Activated B cell treated with CpG ODN at 0.5 μM for 24 hours (primary cell): ENCODE measurements at regions of chr7 and their contacts with region 1.

Region 1: DNA sequence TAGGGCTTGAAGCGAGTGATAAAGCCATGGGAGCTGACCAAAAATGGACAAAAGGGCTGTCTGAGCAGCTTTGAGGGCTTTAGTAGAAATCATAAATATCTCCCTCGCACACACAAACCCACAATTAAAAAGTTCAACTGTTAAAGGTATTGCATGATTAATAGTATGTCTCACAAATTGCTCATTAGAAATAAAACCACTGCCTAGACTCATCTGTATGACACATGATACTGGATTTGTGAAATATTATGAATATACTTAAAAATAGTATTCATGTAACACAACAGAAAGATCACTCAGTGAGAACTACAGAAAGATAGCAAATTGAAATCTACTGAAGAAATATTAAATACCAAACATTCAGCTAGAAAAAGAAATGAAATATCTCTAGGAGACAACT is 11.9 kb upstream of the PTPN12 start:
- DNase-seq: no peak
- ATAC-seq: no peak
- H3K4me3 Mint-ChIP-seq: no peak overlapping the region
- H3K27ac Mint-ChIP-seq: no peak overlapping the region
- H3K4me1 Mint-ChIP-seq: peaks cover 14% of the 10 kb centered on the region
- H3K27me3 Mint-ChIP-seq: no peaks in the 10 kb centered on the region
- CTCF ChIP-seq: no peak

Region 2: GRCh38 chr7:77460057-77460486 is 65.2 kb before region 1 on chr7:
- CTCF ChIA-PET with region 1: no interaction called
- POLR2A ChIA-PET with region 1: no interaction called
- intact Hi-C with region 1: no loop called
- DNase-seq: no peak
- ATAC-seq: no peak
- H3K4me3 Mint-ChIP-seq: no peak overlapping the region
- H3K27ac Mint-ChIP-seq: no peak overlapping the region
- H3K4me1 Mint-ChIP-seq: peaks cover 17% of the 10 kb centered on the region
- H3K27me3 Mint-ChIP-seq: no peaks in the 10 kb centered on the region
- CTCF ChIP-seq: no peak

Region 3: GRCh38 chr7:77933394-77933793 is 408.2 kb after region 1 on chr7:
- CTCF ChIA-PET with region 1: no interaction called
- POLR2A ChIA-PET with region 1: interaction called, 15 read pairs
- intact Hi-C with region 1: no loop called
- DNase-seq: no peak
- ATAC-seq: no peak
- H3K4me3 Mint-ChIP-seq: no peak overlapping the region
- H3K27ac Mint-ChIP-seq: peak overlapping the region; percentile 5
- H3K4me1 Mint-ChIP-seq: peaks cover 24% of the 10 kb centered on the region
- H3K27me3 Mint-ChIP-seq: no peaks in the 10 kb centered on the region
- CTCF ChIP-seq: no peak